ENCODE measurements at regions of chr15 and their contacts with region 1.

Region 1: GRCh38 chr15:53586799-53587198 is 172.7 kb downstream of the WDR72 start:
- DNase-seq: peak; percentile 28
- ATAC-seq: peak; percentile 62; the same call in 1 of the 2 replicates
- H3K4me3 ChIP-seq: no peak overlapping the region
- H3K27ac ChIP-seq: no peak overlapping the region
- H3K4me1 ChIP-seq: no peaks in the 10 kb centered on the region
- H3K27me3 ChIP-seq: no peaks in the 10 kb centered on the region
- CTCF ChIP-seq: peak in 2 of 3 experiments; percentile 66 to 74; a peak in 4 of 6 replicates
- POLR2A ChIP-seq: no peak
- RAD21 ChIP-seq: peak; percentile 42; the same call in 1 of the 2 replicates

Region 2: GRCh38 chr15:53384417-53384816 is 202.4 kb before region 1 on chr15:
- CTCF ChIA-PET with region 1: no interaction called
- POLR2A ChIA-PET with region 1: no interaction called
- RAD21 ChIA-PET with region 1: no interaction called
- intact Hi-C with region 1: loop called (anchors 10 kb)
- DNase-seq: no peak
- ATAC-seq: peak; percentile 74
- H3K4me3 ChIP-seq: no peak overlapping the region
- H3K27ac ChIP-seq: no peak overlapping the region
- H3K4me1 ChIP-seq: no peaks in the 10 kb centered on the region
- H3K27me3 ChIP-seq: no peaks in the 10 kb centered on the region
- CTCF ChIP-seq: peak; percentile 19 to 58 (median 52); a peak in 5 of 6 replicates
- POLR2A ChIP-seq: no peak
- RAD21 ChIP-seq: peak; percentile 30; the same call in 1 of the 2 replicates